Thyroid gland (tissue), 4 donors: ENCODE measurements at regions of chr2 and their contacts with region 1.

Region 1: DNA sequence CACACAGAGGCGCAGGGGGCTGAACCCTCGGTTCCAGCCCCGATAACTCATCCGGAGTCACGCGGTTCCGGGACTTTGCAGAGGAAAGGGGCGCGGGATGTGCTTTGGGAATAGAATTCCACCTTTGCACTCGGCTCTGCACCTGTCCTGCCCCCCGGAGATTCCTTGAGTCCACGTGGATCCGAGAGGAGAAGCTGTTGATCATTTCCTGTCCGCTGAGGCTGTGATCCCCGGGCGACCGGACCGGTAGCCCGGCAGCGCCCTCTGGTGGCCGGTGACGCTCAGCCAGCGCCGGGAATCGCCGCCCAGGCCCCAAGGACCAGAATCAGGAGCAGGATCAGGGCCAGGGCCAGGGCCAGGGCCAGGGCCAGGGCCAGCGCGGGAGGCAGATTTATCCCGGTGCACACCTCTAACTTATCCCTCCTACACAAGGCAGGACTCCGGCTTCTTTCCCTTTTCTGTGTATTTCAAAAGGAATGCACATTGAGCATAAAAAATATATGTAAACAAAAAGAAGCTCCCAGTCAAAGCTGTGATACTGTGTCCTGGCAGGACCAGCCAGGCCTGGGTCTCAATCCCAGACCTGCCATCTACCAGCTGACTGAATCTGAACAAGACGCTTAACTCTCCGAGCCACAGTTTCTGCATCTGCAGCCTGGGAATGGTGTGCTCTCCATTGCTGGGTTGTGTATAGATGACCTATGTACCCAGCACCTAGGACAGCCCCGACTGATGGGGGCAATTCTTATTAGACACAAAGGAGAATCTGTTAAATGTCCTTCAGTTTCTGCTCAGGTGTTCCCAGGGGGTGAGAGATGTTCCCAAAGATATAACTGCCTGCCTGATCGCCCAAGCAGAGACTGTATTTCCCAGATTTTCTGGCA is 8.5 kb upstream of the SPATA3 start:
- DNase-seq: peak; percentile 76 to 82
- H3K4me3 ChIP-seq: peak overlapping the region in 1 of 3 donors; percentile 16
- H3K27ac ChIP-seq: no peak overlapping the region
- H3K4me1 ChIP-seq: no peaks in the 10 kb centered on the region
- H3K27me3 ChIP-seq: peaks cover 11% of the 10 kb centered on the region
- CTCF ChIP-seq: peak; percentile 68 to 94 (median 86)
- POLR2A ChIP-seq: no peak

Region 2: DNA sequence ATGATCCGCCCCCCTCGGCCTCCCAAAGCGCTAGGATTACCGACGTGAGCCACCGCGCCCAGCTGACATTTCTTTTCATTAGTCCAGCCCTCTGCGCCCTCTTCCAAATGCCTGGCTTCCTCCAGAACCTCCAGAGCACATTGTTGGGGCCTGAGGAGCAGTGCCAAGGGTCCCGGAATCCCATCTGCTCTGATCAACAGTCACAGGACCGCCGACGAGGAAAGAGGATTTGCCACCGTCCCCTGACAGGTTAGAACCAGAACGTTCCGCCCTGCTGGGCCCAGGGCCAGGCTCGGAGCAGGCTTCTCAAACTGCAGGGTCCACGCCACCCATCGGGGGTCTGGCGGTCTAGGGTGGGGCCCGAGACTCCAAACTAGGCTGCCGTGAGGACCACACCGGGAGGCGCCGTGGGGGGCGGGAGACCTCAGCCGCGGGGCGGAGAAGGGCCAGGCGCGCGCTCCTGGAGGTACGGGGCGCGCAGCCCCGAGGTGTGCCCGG is 159.6 kb before region 1 on chr2:
- intact Hi-C with region 1: loop called (anchors 2 kb)
- DNase-seq: peak in 1 of 2 donors; percentile 10
- H3K4me3 ChIP-seq: peak overlapping the region in 1 of 3 donors; percentile 23
- H3K27ac ChIP-seq: no peak overlapping the region
- H3K4me1 ChIP-seq: peaks cover 9 to 17% of the 10 kb centered on the region in 2 donors
- H3K27me3 ChIP-seq: peaks cover 5% of the 10 kb centered on the region
- CTCF ChIP-seq: no peak
- POLR2A ChIP-seq: no peak

Region 3: GRCh38 chr2:230847883-230848388 is 139.4 kb before region 1 on chr2:
- intact Hi-C with region 1: loop called (anchors 2 kb)
- DNase-seq: peak; percentile 83 to 86
- H3K4me3 ChIP-seq: no peak overlapping the region
- H3K27ac ChIP-seq: no peak overlapping the region
- H3K4me1 ChIP-seq: peaks cover 4% of the 10 kb centered on the region in 2 donors
- H3K27me3 ChIP-seq: no peaks in the 10 kb centered on the region
- CTCF ChIP-seq: peak; percentile 52 to 89 (median 68)
- POLR2A ChIP-seq: no peak

Region 4: DNA sequence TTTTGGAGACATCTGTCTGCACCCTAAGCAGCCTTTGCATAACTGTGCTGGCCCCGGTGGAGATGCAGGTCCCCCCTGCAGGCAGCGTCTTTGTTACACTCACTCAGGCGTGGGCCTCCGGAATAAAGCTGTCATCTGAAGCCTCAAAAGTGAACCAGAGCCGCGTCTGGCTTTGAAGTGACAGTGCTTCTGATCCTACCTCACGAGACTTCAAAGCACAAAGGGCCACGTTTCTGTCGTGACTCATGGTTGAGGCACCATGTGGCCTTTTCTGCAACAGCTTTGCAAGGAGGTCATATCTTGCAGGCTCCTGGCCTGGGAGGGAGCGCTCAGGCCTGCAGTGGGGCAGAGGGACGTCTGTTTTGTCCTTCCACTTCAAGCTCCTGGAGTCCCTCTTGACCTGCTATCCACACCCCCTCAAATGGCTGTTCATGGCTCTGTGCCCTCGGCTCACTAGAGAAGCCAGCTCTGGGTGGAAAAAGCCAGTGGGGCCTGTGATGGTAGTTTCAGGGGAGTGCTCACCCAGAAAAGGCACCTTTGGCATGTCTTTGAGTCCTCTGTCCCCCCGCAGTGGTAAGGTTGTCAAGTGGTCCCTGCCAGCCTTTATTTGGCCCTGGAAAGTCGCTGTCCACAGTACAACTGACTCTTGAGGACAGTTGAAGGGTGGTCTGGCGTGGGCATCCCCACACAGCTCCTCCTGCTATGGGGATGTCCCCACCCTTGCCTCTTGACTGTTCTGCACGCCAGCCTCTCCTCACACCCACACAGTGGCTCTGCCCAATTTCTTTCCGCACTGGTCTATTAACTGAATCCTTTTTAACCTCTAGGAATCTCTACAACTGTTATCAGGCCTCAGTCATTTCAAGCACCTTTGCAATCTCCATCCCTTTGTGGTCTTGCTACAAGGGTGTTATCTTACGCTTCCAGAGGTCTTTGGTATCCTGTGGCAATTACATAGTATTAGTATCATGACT is 81.6 kb before region 1 on chr2:
- intact Hi-C with region 1: loop called (anchors 2 kb)
- DNase-seq: peak; percentile 87 to 93
- H3K4me3 ChIP-seq: no peak overlapping the region
- H3K27ac ChIP-seq: peak overlapping the region in 2 of 3 donors; percentile 32 to 36
- H3K4me1 ChIP-seq: peaks cover 11 to 38% of the 10 kb centered on the region in 2 donors
- H3K27me3 ChIP-seq: no peaks in the 10 kb centered on the region
- CTCF ChIP-seq: no peak
- POLR2A ChIP-seq: no peak